ENCODE measurements at regions of chr16 and their contacts with region 1.

Region 1: DNA sequence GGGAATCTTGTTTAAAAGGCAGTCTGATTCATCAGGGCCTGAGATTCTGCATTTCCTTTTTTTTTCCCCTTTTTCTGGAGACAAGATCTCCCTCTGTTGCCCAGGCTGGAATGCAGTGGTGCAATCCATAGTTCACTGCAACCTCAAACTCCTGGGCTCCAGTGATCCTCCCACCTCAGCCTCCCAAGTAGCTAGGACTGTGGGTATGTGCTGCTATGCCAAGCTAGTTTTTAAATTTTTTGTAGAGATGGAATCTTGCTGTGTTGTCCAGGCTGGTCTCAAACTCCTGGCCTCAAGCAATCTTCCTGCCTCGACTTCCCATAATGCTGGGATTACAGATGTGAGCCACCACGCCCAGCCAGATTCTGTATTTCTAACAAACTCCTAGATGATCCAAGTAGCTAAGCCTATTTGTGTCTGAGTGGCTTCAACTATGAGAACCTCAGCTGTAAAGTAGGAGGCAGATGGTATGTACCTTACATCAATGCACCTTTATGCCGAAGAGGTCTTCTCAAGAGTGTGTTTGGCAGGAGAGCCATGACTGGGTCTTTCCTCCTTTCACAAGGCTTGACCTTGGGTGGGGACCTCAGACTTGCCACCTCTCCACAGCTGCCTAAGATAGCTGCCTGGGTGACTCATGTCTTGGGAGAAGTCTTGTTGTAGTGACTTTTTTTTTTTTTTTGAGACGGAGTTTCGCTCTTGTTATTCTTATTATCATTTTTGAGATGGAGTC is 10.9 kb downstream of the LDAF1 start:
- DNase-seq: no peak
- ATAC-seq: no peak
- H3K4me3 ChIP-seq: no peak overlapping the region
- H3K4me3 Mint-ChIP-seq: no peak overlapping the region
- H3K27ac ChIP-seq: no peak overlapping the region
- H3K27ac Mint-ChIP-seq: no peak overlapping the region
- H3K4me1 ChIP-seq: no peaks in the 10 kb centered on the region
- H3K4me1 Mint-ChIP-seq: no peaks in the 10 kb centered on the region
- H3K27me3 ChIP-seq: no peaks in the 10 kb centered on the region
- H3K27me3 Mint-ChIP-seq: no peaks in the 10 kb centered on the region
- CTCF ChIP-seq: no peak

Region 2: DNA sequence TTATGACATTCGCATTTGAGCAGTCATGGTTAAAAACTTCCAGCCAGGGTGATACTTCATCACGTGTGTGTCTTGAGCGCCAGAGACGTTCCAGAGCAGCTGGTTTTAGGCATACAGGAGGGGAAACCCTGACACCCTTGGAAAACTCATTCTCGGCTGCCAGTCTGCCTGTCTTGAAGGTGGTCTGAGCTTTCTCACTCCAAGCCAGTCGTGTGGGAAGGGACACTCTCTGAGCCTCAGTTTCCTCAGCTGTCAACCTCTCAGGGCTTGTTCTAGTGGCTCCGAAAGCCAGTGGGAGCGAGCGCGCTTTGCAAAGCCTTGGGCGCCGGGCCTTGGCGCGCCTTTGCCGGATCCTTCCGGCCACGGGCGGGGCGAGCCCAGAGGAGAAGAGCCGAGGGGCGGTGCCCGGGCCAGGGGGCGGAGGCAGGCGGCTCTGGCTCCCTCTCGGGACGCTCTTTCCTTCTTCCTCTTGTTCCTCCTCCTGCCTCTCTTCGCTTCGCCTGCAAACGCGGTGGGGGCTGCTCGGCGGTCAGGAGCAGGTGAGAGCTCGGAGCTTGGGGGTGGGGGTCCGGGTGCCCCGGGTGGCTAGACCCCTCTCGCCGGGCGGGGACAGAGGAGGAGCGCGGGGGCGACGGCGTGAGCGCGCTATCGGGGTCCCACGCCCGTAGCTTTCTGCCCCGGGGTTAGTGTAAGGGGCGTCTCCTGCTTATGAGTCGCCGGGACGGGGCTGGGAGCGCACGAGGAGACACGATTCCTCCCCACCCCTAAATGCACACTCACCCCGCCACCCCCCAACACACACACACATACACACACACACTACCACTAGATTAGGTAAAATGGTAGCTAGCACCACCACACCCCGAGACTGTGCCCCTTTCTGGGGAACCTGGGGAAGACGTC is 11.0 kb before region 1 on chr16 and contains the start of gene LDAF1:
- CTCF ChIA-PET with region 1: interaction called, 5 read pairs
- POLR2A ChIA-PET with region 1: interaction called, 13 read pairs
- intact Hi-C with region 1: no loop called
- DNase-seq: peak; percentile 47 to 86 (median 75)
- ATAC-seq: peak; percentile 96
- H3K4me3 ChIP-seq: peak within 1 kb of the TSS; percentile 73 to 76
- H3K4me3 Mint-ChIP-seq: peak within 1 kb of the TSS; percentile 92
- H3K27ac ChIP-seq: peak within 1 kb of the TSS; percentile 17 to 54
- H3K27ac Mint-ChIP-seq: peak within 1 kb of the TSS; percentile 77
- H3K4me1 ChIP-seq: peaks cover 18% of the 10 kb centered on the region
- H3K4me1 Mint-ChIP-seq: peaks cover 31% of the 10 kb centered on the region
- H3K27me3 ChIP-seq: no peaks in the 10 kb centered on the region
- H3K27me3 Mint-ChIP-seq: no peaks in the 10 kb centered on the region
- CTCF ChIP-seq: no peak
- total RNA-seq, gene LDAF1: 7.7 to 7.9 TPM

Region 3: DNA sequence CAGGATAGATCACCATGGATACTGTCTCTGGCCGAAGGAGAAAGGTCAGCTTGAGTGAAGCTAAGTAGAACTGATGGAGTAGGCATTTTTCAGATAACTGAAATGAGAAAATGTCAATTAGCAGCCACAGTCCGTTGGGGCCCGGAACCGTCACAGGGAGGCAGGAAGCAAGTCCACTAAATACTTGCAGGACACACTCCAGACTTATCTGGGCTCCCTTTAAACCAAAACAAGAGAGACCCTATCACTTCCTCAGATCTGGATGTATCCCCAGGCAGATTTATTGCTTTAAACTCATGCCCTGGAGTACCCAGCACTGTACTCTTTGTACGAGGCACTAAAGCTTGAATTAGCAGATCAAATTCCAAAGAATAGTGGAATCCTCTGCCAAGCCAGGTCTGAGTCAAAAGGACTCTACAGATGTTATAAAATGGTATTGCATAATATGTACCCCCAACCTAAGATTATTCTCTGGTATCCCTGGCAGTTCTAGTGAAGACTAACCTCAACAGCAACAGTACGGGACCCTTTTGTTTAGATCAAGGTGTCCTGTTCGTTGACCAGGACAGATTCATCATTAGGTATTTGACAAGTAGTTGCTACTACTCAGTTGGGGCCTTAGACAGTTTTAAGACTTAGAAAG is 33.9 kb after region 1 on chr16:
- CTCF ChIA-PET with region 1: no interaction called
- POLR2A ChIA-PET with region 1: no interaction called
- intact Hi-C with region 1: no loop called
- DNase-seq: no peak
- ATAC-seq: no peak
- H3K4me3 ChIP-seq: no peak overlapping the region
- H3K4me3 Mint-ChIP-seq: no peak overlapping the region
- H3K27ac ChIP-seq: no peak overlapping the region
- H3K27ac Mint-ChIP-seq: no peak overlapping the region
- H3K4me1 ChIP-seq: no peaks in the 10 kb centered on the region
- H3K4me1 Mint-ChIP-seq: no peaks in the 10 kb centered on the region
- H3K27me3 ChIP-seq: no peaks in the 10 kb centered on the region
- H3K27me3 Mint-ChIP-seq: peaks cover 16% of the 10 kb centered on the region
- CTCF ChIP-seq: no peak

Region 4: DNA sequence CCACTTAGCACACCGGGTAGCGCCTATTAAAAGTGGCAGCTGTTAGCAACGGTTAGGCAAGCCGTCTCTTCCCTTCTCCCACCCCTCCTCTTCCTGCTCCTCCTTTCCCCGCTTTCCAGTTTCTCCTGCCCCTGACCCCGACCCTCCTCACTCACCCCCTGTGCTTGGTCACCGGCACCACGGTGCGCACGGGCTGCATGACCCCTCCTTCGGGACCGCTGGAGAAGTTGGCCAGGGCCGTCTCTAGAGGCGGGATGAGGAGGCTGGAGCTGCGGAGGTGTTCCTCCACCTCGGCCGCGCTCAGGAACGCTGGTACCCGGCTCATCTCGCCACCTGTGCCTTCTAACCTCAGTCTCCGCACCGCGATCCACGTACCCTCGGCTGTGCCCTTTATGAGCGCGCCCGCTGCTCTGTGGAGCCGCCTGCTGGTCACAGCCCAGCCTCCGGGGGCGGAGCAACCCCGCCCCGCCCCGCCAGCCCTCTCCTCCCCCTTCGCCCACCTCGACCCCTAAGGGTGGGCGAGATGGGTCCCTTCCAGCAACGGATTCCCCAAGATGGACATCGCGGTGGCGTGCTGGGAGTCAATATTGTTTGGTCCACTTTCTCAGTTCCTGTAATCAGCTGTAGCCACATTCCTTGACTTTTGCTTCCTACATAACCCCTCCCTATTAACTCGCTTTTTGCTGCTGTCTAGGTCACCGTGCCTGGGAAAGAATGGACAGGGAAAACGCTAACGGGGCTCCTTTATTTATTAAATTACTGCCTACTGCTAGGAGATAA is 108.7 kb after region 1 on chr16 and contains the start of gene CRYM:
- CTCF ChIA-PET with region 1: no interaction called
- POLR2A ChIA-PET with region 1: no interaction called
- intact Hi-C with region 1: no loop called
- DNase-seq: peak in 5 of 9 experiments; percentile 16 to 42 (median 22)
- ATAC-seq: peak; percentile 70
- H3K4me3 ChIP-seq: no peak within 1 kb of the TSS
- H3K4me3 Mint-ChIP-seq: peak within 1 kb of the TSS; percentile 29
- H3K27ac ChIP-seq: no peak within 1 kb of the TSS
- H3K27ac Mint-ChIP-seq: no peak within 1 kb of the TSS
- H3K4me1 ChIP-seq: peaks cover 6% of the 10 kb centered on the region
- H3K4me1 Mint-ChIP-seq: no peaks in the 10 kb centered on the region
- H3K27me3 ChIP-seq: peaks cover 5 to 14% of the 10 kb centered on the region in 2 experiments
- H3K27me3 Mint-ChIP-seq: peaks cover 64% of the 10 kb centered on the region
- CTCF ChIP-seq: no peak
- total RNA-seq, gene CRYM: not detected

Measured in CD8-positive, alpha-beta T cell (primary cell).